ENCODE measurements at regions of chr17 and their contacts with region 1.

Region 1: DNA sequence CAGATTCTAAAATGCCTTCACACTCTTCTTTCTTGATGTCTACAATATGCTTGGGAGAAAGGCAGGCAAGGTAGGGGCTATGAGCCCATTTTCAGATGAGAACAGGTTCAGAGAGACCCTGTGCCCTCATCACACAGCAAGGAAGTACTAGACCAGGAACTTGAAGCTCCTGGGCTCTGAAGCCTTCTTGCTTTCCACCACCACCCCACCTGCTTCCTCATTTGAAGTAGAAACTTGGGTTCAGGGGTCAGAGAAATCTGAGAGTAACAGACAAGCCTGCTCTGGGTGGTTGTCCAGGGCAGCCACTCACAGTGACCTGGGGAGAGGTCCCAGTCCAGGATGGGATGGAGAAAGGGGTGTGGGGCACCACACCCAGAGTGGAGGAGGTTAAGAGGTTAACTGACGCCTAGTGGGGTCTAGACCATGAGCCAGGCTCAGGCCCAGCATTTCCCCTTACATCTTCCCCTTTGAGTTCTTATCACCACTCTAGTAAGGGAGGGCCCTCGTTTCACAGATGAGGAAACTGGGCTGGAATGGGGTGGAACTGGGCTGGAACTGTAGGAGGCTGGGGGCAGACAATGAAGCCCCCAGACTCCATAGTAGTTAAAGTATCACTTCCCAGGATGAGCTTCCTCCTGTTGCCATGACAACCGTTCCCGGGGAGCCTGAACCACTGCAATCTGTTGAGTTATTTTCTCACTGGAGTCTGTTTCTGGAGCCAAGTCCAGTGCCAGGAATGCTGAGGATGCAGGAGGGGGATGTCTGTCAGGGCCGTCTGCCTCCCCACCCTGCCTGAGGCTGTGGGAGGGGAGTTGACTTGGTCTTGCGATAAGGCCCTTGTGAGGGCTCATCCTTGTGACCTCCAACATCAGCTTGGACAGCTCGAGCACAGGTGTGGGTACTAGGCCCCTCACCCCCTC is 16.2 kb upstream of the PHF12 start:
- DNase-seq: no peak
- ATAC-seq: no peak
- H3K4me3 ChIP-seq: no peak overlapping the region
- H3K27ac ChIP-seq: peak overlapping the region in 1 of 10 donors; percentile 68
- H3K4me1 ChIP-seq: peaks cover 3 to 52% (median 37%) of the 10 kb centered on the region in 9 donors
- H3K27me3 ChIP-seq: peaks cover 0 to 17% (median 6%) of the 10 kb centered on the region in 7 donors
- CTCF ChIP-seq: no peak

Region 2: GRCh38 chr17:28951991-28952975 is 15.2 kb before region 1 on chr17:
- intact Hi-C with region 1: no loop called
- DNase-seq: peak; percentile 92 to 98
- ATAC-seq: peak; percentile 81 to 92 (median 87)
- H3K4me3 ChIP-seq: peak overlapping the region; percentile 40 to 93 (median 74)
- H3K27ac ChIP-seq: peak overlapping the region; percentile 87 to 99 (median 98)
- H3K4me1 ChIP-seq: peaks cover 8 to 28% (median 25%) of the 10 kb centered on the region in 9 donors
- H3K27me3 ChIP-seq: no peaks in the 10 kb centered on the region
- CTCF ChIP-seq: peak in 1 of 9 donors; percentile 8

Region 3: DNA sequence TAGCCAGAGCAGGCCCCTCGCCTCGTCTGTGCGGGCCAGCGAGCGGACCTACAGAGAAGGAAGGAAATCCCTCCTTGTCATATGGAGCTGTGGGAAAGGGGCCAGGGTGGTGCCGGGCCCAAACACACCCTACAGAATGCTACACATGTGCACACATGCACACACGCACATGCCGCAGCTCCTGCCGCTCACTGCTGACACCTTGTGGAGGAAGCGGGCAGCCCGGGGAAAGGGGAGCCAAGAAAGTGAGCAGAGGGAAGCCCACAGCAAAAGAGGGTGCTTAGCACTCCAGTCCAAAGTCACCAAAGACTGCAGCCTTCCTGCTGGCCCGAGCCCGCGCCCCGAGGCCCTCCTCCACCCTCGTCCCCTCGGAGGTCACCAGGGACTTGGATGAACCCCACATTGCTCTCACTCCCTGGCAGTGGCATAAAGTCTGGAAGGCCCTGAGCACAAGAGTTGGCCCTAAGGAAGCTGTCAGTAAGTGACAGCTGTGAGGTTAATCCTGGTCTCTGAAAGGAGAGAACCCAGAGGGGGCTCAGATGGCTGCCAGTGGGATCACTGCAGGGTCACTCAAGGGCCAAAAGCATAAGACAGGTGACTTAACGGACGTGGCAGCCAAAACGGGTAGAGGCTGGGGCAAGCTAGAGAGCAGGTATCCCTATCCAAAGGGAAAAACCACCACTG is 144.5 kb after region 1 on chr17:
- intact Hi-C with region 1: loop called (anchors 1 to 5 kb)
- DNase-seq: peak; percentile 65 to 81
- ATAC-seq: peak; percentile 50 to 73 (median 62)
- H3K4me3 ChIP-seq: no peak overlapping the region
- H3K27ac ChIP-seq: peak overlapping the region in 9 of 10 donors; percentile 4 to 78 (median 49)
- H3K4me1 ChIP-seq: peaks cover 26 to 59% (median 34%) of the 10 kb centered on the region in 9 donors
- H3K27me3 ChIP-seq: no peaks in the 10 kb centered on the region
- CTCF ChIP-seq: peak; percentile 76 to 95 (median 92)

Region 4: DNA sequence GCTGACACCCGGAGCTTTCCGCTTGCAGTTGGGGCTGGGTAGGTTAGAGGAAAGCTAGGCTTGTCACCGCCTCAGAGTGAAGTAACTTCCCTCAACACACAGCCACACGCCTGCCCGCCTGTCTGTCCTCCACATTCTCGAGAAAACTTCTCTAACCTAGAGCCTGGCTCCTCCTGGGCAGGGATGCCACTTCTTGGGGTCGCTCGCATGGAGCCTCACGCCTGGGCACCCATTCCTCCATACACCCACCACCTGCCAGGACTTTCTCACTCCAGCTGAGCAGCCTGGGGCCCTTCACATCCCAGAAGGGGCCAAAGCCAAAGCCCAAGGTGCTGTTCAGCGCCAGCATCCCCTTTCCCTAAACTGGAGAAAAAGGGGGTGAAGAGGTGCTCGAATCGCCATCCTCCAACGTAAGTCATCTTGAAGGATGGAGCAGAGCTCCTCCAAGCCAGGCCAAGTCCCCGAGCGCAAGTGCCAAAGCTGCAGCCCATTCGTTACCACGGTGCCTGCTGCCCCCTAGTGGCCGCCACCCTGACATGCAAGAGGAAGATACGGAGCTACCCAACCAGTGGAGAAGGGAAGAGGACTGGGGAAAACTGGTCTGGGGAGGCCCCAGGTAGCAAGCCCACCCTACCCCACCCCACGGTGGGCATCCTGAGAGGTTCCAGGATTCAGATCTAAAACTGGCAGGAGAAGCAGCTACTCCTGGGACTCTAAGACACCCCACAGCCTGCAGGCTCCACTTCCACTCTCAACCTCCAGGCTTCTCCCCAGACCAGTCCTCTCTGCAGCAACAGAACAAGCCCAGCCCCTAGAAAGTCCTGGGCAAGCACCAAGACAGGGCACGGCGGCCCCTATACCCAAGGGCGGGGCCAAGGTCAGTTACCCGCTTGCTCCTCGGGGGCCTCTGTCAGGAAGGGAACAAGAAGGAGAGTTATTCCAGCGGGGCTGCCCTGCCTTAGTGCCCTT is 149.6 kb after region 1 on chr17:
- intact Hi-C with region 1: loop called (anchors 1 to 5 kb)
- DNase-seq: peak; percentile 70 to 84
- ATAC-seq: peak in 7 of 8 donors; percentile 16 to 64 (median 50)
- H3K4me3 ChIP-seq: no peak overlapping the region
- H3K27ac ChIP-seq: peak overlapping the region in 3 of 10 donors; percentile 25 to 61 (median 31)
- H3K4me1 ChIP-seq: peaks cover 15 to 40% (median 22%) of the 10 kb centered on the region in 9 donors
- H3K27me3 ChIP-seq: no peaks in the 10 kb centered on the region
- CTCF ChIP-seq: peak; percentile 84 to 98 (median 92)

Measured in heart right ventricle (tissue), 16 donors.